ENCODE measurements at regions of chr7 and their contacts with region 1.

Region 1: GRCh38 chr7:618539-619367 is 99.1 kb upstream of the PDGFA start:
- DNase-seq: peak; percentile 57 to 91 (median 85)
- H3K4me3 ChIP-seq: peak overlapping the region; percentile 5
- H3K4me3 Mint-ChIP-seq: peak overlapping the region; percentile 79 to 90 (median 88)
- H3K27ac ChIP-seq: peak overlapping the region; percentile 58
- H3K27ac Mint-ChIP-seq: peak overlapping the region; percentile 97 to 100 (median 100)
- H3K4me1 ChIP-seq: peaks cover 50% of the 10 kb centered on the region
- H3K4me1 Mint-ChIP-seq: peaks cover 40 to 54% (median 53%) of the 10 kb centered on the region in 3 donors
- H3K27me3 ChIP-seq: no peaks in the 10 kb centered on the region
- H3K27me3 Mint-ChIP-seq: no peaks in the 10 kb centered on the region

Region 2: DNA sequence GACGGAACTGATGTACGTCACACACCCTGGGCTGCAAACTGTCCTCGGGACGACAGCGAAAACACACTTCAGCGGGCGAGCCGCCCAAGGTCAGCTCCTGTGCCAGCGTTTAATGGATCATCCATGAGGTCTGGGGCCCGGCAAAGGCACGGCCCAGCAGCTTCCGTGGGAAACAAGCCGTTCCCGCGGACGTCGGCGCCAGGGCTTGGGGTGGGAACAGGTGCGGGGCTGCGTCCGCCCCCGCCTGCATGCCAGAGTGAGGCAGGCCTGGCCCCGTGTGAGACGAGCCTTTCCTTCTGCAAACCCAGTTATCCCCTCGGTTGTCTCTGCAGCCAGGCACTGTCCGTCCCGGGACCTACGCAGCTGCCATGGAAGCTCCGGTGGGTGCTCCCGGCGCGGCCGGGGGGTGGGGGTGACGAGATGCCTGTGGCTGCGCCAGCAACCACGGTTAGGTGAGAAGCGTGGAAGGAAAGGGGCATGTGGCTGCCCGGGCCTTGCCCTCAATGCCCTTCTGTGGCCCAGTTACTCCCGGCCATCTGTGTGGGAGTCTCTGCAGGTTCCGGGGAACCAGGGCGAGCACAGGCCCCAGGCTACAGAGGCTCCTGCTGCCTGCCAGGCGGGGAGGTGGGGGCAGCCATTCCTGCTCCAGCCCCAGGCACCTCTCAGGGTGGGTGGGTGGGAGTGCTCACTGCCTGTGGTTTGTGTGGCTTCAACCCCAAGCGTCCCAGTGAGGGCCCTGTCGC is 57.0 kb before region 1 on chr7:
- CTCF ChIA-PET with region 1: no interaction called
- POLR2A ChIA-PET with region 1: no interaction called
- DNase-seq: no peak
- H3K4me3 ChIP-seq: no peak overlapping the region
- H3K4me3 Mint-ChIP-seq: no peak overlapping the region
- H3K27ac ChIP-seq: no peak overlapping the region
- H3K27ac Mint-ChIP-seq: peak overlapping the region in 1 of 8 donors; percentile 33
- H3K4me1 ChIP-seq: no peaks in the 10 kb centered on the region
- H3K4me1 Mint-ChIP-seq: peaks cover 3 to 4% (median 4%) of the 10 kb centered on the region in 3 donors
- H3K27me3 ChIP-seq: no peaks in the 10 kb centered on the region
- H3K27me3 Mint-ChIP-seq: no peaks in the 10 kb centered on the region

Region 3: GRCh38 chr7:604001-604883 is 14.5 kb before region 1 on chr7:
- CTCF ChIA-PET with region 1: interaction called, 5 read pairs
- POLR2A ChIA-PET with region 1: interaction called, 40 read pairs
- DNase-seq: peak; percentile 87 to 97 (median 92)
- H3K4me3 ChIP-seq: peak overlapping the region; percentile 80
- H3K4me3 Mint-ChIP-seq: peak overlapping the region; percentile 90 to 99 (median 94)
- H3K27ac ChIP-seq: peak overlapping the region; percentile 96
- H3K27ac Mint-ChIP-seq: peak overlapping the region; percentile 99 to 100 (median 100)
- H3K4me1 ChIP-seq: peaks cover 62% of the 10 kb centered on the region
- H3K4me1 Mint-ChIP-seq: peaks cover 57 to 75% (median 63%) of the 10 kb centered on the region in 3 donors
- H3K27me3 ChIP-seq: no peaks in the 10 kb centered on the region
- H3K27me3 Mint-ChIP-seq: no peaks in the 10 kb centered on the region